Panc1 (cell line): ENCODE measurements at regions of chr9 and their contacts with region 1.

Region 1: GRCh38 chr9:75636427-75637045 is 253.9 kb upstream of the PCSK5 start:
- DNase-seq: no peak
- ATAC-seq: no peak
- H3K4me3 ChIP-seq: no peak overlapping the region
- H3K27ac ChIP-seq: no peak overlapping the region
- H3K4me1 ChIP-seq: no peaks in the 10 kb centered on the region
- H3K27me3 ChIP-seq: no peaks in the 10 kb centered on the region
- CTCF ChIP-seq: no peak

Region 2: GRCh38 chr9:75648034-75648433 is 11.5 kb after region 1 on chr9:
- CTCF ChIA-PET with region 1: no interaction called
- POLR2A ChIA-PET with region 1: no interaction called
- in situ Hi-C with region 1: no loop called
- intact Hi-C with region 1: no loop called
- DNase-seq: no peak
- ATAC-seq: no peak
- H3K4me3 ChIP-seq: no peak overlapping the region
- H3K27ac ChIP-seq: no peak overlapping the region
- H3K4me1 ChIP-seq: no peaks in the 10 kb centered on the region
- H3K27me3 ChIP-seq: no peaks in the 10 kb centered on the region
- CTCF ChIP-seq: no peak

Region 3: GRCh38 chr9:76693912-76694311 is 1057.4 kb after region 1 on chr9:
- CTCF ChIA-PET with region 1: interaction called, 10 read pairs
- POLR2A ChIA-PET with region 1: no interaction called
- in situ Hi-C with region 1: no loop called
- intact Hi-C with region 1: no loop called
- DNase-seq: no peak
- ATAC-seq: no peak
- H3K4me3 ChIP-seq: no peak overlapping the region
- H3K27ac ChIP-seq: no peak overlapping the region
- H3K4me1 ChIP-seq: peaks cover 4% of the 10 kb centered on the region; the same call in 1 of the 2 replicates
- H3K27me3 ChIP-seq: peaks cover 5% of the 10 kb centered on the region; the same call in 1 of the 2 replicates
- CTCF ChIP-seq: no peak